Dorsolateral prefrontal cortex (tissue), 120 donors: ENCODE measurements at regions of chr17 and their contacts with region 1.

Region 1: GRCh38 chr17:50841949-50842354 is 6.6 kb downstream of the WFIKKN2 start:
- DNase-seq: peak in 9 of 10 donors; percentile 77 to 87 (median 84)
- H3K4me3 ChIP-seq: peak overlapping the region in 1 of 59 donors; percentile 8
- H3K27ac ChIP-seq: peak overlapping the region in 26 of 59 donors; percentile 2 to 90 (median 56)
- H3K27me3 ChIP-seq: no peaks in the 10 kb centered on the region
- CTCF ChIP-seq: peak; percentile 43 to 97 (median 89)

Region 2: DNA sequence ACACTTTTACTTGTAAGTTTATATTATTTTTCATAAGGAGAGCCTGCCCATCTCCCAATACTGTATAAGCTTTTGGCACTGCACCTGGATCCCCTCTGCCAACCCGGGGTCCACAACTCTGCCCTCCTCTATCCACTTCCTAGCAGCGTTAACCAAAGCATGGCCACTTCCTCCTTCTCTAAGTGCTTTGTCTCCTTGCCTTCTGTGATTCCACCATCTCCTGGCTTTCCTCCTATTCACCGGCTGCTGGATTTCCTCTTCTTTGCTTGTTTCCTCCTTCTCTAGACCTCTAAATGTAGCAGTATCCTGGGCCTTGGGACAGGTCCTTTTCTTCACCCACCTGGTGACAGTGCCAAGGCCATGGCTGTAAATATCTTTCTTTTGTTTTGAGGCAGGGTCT is 26.6 kb before region 1 on chr17:
- intact Hi-C with region 1: loop called in 1 of 2 experiments (anchors 1 kb)
- DNase-seq: no peak
- H3K4me3 ChIP-seq: no peak overlapping the region
- H3K27ac ChIP-seq: no peak overlapping the region
- H3K27me3 ChIP-seq: no peaks in the 10 kb centered on the region
- CTCF ChIP-seq: no peak